Dendritic cell treated with granulocyte-macrophage colony-stimulating factor and Interleukin-4, amounts not matched to agents 40 ng/mL and 50 ng/mL, for 4 days (primary cell): ENCODE measurements at regions of chr19 and their contacts with region 1.

Region 1: GRCh38 chr19:29610563-29611271 is 4.6 kb downstream of the POP4 start:
- H3K4me3 Mint-ChIP-seq: no peak overlapping the region
- H3K27ac Mint-ChIP-seq: peak overlapping the region; percentile 18
- H3K4me1 Mint-ChIP-seq: peaks cover 11% of the 10 kb centered on the region
- H3K27me3 Mint-ChIP-seq: no peaks in the 10 kb centered on the region

Region 2: DNA sequence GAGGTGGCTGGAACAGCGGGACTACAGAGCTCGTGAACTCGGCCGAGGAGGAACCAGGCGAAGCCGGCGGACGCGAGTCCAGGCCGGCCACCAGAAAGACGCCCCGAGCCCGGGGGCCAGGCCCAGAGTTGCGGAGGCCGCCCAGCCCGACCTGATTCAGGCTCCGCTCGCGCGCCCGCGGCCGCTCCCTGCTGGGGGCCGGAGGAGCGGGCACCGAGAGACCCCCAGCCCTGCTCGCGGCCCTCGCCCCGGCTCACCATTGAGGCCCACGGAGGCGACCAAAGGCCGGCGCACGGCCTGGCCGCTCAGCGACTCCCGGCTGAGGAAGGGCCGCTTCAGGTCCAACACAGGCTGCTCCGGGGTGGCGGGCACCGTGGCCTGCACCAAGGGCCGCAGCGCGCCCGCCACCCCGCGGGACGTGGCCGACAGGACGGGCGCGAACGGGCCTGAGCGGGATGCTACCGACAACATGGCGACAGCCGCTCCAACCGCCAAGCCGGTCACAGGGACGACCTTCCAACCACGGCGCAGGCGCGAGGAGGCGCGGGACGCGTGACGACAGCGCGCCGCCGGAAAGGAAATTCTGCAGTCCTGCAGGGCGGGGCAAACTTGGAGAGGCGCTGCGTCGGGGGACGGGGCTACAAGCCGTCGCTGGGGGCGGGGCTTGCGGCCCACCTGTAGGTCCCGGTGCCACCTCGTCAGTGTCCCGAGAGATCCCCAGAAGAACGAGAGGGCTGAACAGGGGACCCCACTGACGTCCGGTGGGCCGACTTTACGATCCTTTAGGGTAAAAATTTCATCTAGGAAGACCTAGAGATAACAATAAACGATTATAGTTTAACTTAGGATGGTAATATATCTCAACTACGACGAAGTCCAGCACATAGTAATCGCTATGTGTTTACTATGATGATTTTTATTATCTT is 397.8 kb before region 1 on chr19 and contains the start of gene UQCRFS1:
- intact Hi-C with region 1: loop called (anchors 5 kb)
- H3K4me3 Mint-ChIP-seq: peak within 1 kb of the TSS; percentile 95
- H3K27ac Mint-ChIP-seq: peak within 1 kb of the TSS; percentile 92
- H3K4me1 Mint-ChIP-seq: peaks cover 39% of the 10 kb centered on the region
- H3K27me3 Mint-ChIP-seq: peaks cover 3% of the 10 kb centered on the region

Region 3: GRCh38 chr19:29694669-29695627 is 84.2 kb after region 1 on chr19:
- intact Hi-C with region 1: loop called (anchors 1 kb)
- H3K4me3 Mint-ChIP-seq: no peak overlapping the region
- H3K27ac Mint-ChIP-seq: no peak overlapping the region
- H3K4me1 Mint-ChIP-seq: peaks cover 8% of the 10 kb centered on the region
- H3K27me3 Mint-ChIP-seq: no peaks in the 10 kb centered on the region

Region 4: GRCh38 chr19:29714953-29715700 is 104.4 kb after region 1 on chr19 and contains the start of gene C19orf12:
- intact Hi-C with region 1: loop called (anchors 1 kb)
- H3K4me3 Mint-ChIP-seq: peak within 1 kb of the TSS; percentile 93
- H3K27ac Mint-ChIP-seq: peak within 1 kb of the TSS; percentile 96
- H3K4me1 Mint-ChIP-seq: peaks cover 57% of the 10 kb centered on the region
- H3K27me3 Mint-ChIP-seq: no peaks in the 10 kb centered on the region

Region 5: GRCh38 chr19:29844891-29845572 is 234.3 kb after region 1 on chr19:
- intact Hi-C with region 1: loop called (anchors 10 kb)
- H3K4me3 Mint-ChIP-seq: peak overlapping the region; percentile 81
- H3K27ac Mint-ChIP-seq: peak overlapping the region; percentile 83
- H3K4me1 Mint-ChIP-seq: peaks cover 38% of the 10 kb centered on the region
- H3K27me3 Mint-ChIP-seq: peaks cover 25% of the 10 kb centered on the region

Region 6: DNA sequence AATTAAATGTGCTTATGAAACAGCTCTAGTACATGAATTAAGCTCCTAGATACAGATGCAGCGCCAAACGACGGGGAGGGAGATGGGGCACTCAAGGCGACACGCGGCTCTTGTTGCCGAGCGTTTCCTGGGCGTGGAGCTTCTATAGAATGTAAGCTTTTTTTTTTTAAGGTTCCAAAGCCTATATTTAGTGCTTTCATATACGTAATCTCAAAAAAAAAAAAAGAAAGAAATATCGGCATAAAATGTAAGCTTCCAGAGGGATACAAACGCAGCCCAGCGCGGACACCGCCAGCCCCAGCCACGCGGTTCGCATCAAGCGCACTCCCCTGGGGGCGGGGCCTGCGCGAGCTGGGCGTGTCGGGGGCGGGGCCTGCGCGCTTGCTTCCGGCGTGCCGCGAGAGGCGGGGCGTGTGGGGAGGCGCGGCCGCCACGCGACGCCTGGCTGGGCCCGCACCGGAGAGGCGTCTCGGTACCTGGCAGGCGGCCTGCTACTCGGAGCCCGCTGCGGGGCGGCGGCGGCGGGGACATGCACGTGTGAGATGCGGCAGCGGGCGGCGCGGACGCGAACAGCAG is 331.2 kb after region 1 on chr19 and contains the start of gene URI1:
- intact Hi-C with region 1: loop called (anchors 10 kb)
- H3K4me3 Mint-ChIP-seq: peak within 1 kb of the TSS; percentile 95
- H3K27ac Mint-ChIP-seq: peak within 1 kb of the TSS; percentile 81
- H3K4me1 Mint-ChIP-seq: peaks cover 27% of the 10 kb centered on the region
- H3K27me3 Mint-ChIP-seq: peaks cover 9% of the 10 kb centered on the region